ENCODE measurements at regions of chr6 and their contacts with region 1.

Region 1: GRCh38 chr6:90350689-90351554 is 54.3 kb upstream of the BACH2 start:
- DNase-seq: peak; percentile 76
- H3K4me3 Mint-ChIP-seq: peak overlapping the region; percentile 68
- H3K27ac Mint-ChIP-seq: peak overlapping the region; percentile 91
- H3K4me1 Mint-ChIP-seq: peaks cover 52% of the 10 kb centered on the region
- H3K27me3 Mint-ChIP-seq: no peaks in the 10 kb centered on the region

Region 2: DNA sequence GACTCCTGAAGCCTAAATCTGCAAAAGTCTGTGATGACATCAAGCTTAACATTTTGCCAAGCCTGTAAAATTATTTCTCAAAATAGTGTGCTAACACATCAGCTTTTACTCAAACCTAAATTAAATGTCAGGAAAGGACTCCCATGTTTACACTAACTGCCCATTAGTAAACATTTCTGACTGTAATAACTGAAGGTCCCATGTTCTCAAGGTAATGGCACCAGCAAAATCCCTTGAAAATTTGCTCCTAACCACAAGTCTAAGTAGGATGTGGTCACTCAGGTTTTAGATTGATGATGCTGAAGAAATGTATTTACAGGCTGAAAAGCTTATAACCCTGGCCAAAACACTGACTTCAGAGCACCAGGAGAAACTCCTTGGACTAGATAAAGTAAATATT is 87.3 kb before region 1 on chr6:
- CTCF ChIA-PET with region 1: no interaction called
- intact Hi-C with region 1: no loop called
- DNase-seq: no peak
- H3K4me3 Mint-ChIP-seq: no peak overlapping the region
- H3K27ac Mint-ChIP-seq: peak overlapping the region; percentile 96
- H3K4me1 Mint-ChIP-seq: peaks cover 96% of the 10 kb centered on the region
- H3K27me3 Mint-ChIP-seq: no peaks in the 10 kb centered on the region

Region 3: DNA sequence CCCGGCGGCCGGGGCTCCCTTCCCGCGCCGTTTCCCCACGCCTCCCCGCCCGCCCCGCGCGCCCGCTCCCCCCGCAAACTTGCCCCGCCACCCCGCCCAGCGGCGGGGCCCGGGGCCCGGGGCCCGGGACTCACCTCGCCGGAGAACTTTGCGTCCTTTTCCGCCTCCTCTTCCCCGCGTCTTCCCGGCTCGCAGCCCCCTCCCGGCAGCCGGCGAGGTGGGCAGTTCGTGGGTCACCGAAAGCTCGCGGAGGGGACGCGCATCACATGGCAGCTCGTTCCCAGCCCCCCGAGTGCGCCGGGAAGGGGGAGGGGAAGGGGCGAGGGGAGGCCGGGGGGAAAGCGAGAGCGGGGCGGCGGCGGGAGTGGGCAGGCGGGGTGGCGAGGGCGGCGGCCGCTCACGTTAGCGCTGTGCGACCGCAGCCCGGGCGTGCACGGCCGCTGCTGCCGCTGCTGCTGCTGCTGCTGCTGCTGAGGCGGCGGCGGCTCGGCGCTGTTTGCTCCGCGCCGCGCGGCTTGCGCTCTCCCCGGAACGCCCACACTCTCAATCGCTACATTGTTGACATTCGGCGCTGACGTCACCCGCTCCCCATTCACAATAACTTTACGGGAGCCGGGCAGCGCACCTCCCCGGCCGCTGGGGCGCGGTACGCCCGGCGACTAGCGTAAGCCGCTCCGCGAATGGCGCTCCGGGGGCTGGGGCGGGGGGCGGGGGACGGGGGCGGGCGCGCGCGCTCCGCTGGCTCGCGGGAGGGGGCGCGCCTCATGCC is 54.4 kb before region 1 on chr6 and contains the start of gene BACH2:
- CTCF ChIA-PET with region 1: interaction called, 7 read pairs
- intact Hi-C with region 1: loop called (anchors 1 kb)
- DNase-seq: peak; percentile 99
- H3K4me3 Mint-ChIP-seq: peak within 1 kb of the TSS; percentile 86
- H3K27ac Mint-ChIP-seq: peak within 1 kb of the TSS; percentile 97
- H3K4me1 Mint-ChIP-seq: peaks cover 41% of the 10 kb centered on the region
- H3K27me3 Mint-ChIP-seq: peaks cover 2% of the 10 kb centered on the region
- total RNA-seq, gene BACH2: 75.1 to 77.9 TPM

Region 4: DNA sequence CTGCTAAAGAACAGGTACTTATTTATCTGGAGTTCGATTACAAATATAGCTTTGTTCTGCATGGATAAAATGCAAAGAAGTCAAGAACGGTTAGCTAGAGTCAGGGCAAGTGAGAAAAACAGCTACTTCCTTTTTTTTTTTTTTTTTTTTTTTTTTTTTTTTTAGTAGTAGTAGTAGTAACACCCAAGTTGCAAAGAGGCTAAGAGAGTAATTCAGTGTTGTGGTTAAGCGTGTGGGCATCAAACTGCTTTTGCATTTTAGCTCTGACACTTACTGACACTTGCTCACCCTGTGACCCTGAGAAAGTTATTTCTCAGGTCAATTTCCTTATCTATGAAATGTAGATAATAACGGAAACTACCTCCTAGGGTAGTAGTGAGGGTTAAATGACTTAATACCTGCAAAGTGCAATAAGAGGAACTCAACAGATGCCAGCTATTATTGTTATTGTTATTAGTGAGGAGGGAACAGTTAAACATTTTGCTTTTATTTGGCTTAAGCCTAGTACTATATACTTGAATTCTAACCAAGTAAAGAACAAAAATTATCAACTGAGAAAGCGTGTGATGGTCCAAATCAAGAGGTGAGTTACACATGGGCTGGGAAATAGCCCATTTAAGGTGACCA is 32.4 kb after region 1 on chr6:
- CTCF ChIA-PET with region 1: interaction called, 3 read pairs
- intact Hi-C with region 1: loop called (anchors 1 kb)
- DNase-seq: peak; percentile 65
- H3K4me3 Mint-ChIP-seq: no peak overlapping the region
- H3K27ac Mint-ChIP-seq: no peak overlapping the region
- H3K4me1 Mint-ChIP-seq: peaks cover 44% of the 10 kb centered on the region
- H3K27me3 Mint-ChIP-seq: no peaks in the 10 kb centered on the region

Measured in activated naive CD4-positive, alpha-beta T cell treated with anti-CD3 and anti-CD28 coated beads for 36 hours (primary cell).